Breast epithelium (tissue), 4 donors: ENCODE measurements at regions of chr14 and their contacts with region 1.

Region 1: GRCh38 chr14:97233319-97233985 is 436.3 kb downstream of the VRK1 start:
- DNase-seq: no peak
- H3K4me3 ChIP-seq: no peak overlapping the region
- H3K27ac ChIP-seq: no peak overlapping the region
- H3K4me1 ChIP-seq: no peaks in the 10 kb centered on the region
- H3K27me3 ChIP-seq: peaks cover 0 to 10% of the 10 kb centered on the region in 2 donors
- CTCF ChIP-seq: no peak
- POLR2A ChIP-seq: no peak

Region 2: DNA sequence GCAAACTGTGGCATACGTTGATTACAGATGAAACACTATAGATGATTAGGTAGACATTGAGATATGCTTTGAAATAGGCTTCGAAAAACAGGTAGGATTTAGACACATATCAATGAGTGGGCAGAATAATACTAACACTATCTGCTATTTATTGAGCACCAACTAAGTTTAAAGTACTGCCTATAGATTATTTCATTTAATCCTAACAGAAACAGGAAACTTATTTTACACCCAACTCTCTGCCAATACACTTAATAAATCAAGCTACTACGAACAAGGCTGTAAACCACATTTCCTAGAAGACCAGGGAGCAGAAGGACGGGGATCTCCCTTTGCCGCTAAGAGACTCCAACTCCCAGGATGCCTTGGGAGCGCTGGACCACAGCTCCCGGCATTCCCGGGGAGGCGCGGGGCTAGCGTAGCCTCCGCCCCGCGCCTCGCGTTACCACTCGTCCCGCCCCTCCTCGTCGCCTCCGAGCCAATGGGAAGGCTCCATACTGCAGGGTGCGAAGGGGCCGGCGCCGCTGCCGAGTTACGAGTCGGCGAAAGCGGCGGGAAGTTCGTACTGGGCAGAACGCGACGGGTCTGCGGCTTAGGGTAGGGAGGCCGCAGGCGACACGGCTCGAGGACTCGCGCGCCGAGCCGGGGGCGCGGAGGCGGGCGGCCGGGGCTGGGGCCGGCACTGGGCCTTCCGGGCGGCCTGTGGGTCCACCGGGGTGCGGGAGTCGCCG is 436.4 kb before region 1 on chr14 and contains the start of gene VRK1:
- intact Hi-C with region 1: no loop called
- DNase-seq: peak; percentile 92 to 95
- H3K4me3 ChIP-seq: peak within 1 kb of the TSS; percentile 61 to 79 (median 72)
- H3K27ac ChIP-seq: peak within 1 kb of the TSS; percentile 8 to 27
- H3K4me1 ChIP-seq: peaks cover 0 to 7% of the 10 kb centered on the region in 2 donors
- H3K27me3 ChIP-seq: no peaks in the 10 kb centered on the region
- CTCF ChIP-seq: no peak
- POLR2A ChIP-seq: no peak
- total RNA-seq, gene VRK1: 13.1 to 19.9 (median 16.7) TPM

Region 3: GRCh38 chr14:98114122-98114895 is 880.9 kb after region 1 on chr14:
- intact Hi-C with region 1: loop called (anchors 5 kb)
- DNase-seq: no peak
- H3K4me3 ChIP-seq: no peak overlapping the region
- H3K27ac ChIP-seq: no peak overlapping the region
- H3K4me1 ChIP-seq: no peaks in the 10 kb centered on the region
- H3K27me3 ChIP-seq: no peaks in the 10 kb centered on the region
- CTCF ChIP-seq: no peak
- POLR2A ChIP-seq: no peak